ENCODE measurements at regions of chr4 and their contacts with region 1.

Region 1: GRCh38 chr4:101042847-101043246 is 304.5 kb downstream of the PPP3CA start:
- DNase-seq: no peak
- ATAC-seq: no peak
- H3K4me3 ChIP-seq: no peak overlapping the region
- H3K27ac ChIP-seq: no peak overlapping the region
- H3K4me1 ChIP-seq: no peaks in the 10 kb centered on the region
- H3K27me3 ChIP-seq: no peaks in the 10 kb centered on the region
- CTCF ChIP-seq: no peak
- EP300 ChIP-seq: no peak
- POLR2A ChIP-seq: no peak
- RAD21 ChIP-seq: no peak

Region 2: DNA sequence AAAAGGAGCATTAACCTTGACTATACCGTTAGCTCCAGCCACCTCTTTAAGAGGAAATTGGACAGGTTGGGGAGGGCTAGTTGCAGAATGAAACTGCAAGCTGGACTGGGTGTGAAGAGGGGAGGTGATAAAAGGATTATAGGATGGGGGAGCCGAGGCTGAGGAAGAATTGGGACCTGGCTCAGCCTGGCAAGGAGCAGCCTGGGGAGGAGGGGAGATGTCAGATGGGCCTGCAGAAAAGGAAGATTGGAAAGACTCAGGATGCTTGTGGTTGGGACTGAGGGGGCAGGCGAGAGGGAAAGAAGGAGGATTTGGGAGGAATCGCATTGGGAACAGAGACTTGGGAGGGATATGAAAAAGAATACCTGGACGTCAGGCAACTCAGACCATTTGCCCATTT is 47.2 kb before region 1 on chr4:
- CTCF ChIA-PET with region 1: no interaction called
- POLR2A ChIA-PET with region 1: no interaction called
- in situ Hi-C with region 1: no loop called
- intact Hi-C with region 1: no loop called
- DNase-seq: no peak
- ATAC-seq: no peak
- H3K4me3 ChIP-seq: no peak overlapping the region
- H3K27ac ChIP-seq: no peak overlapping the region
- H3K4me1 ChIP-seq: no peaks in the 10 kb centered on the region
- H3K27me3 ChIP-seq: no peaks in the 10 kb centered on the region
- CTCF ChIP-seq: no peak
- EP300 ChIP-seq: no peak
- POLR2A ChIP-seq: no peak
- RAD21 ChIP-seq: no peak

Region 3: GRCh38 chr4:101009471-101009870 is 33.4 kb before region 1 on chr4:
- CTCF ChIA-PET with region 1: no interaction called
- POLR2A ChIA-PET with region 1: no interaction called
- in situ Hi-C with region 1: no loop called
- intact Hi-C with region 1: no loop called
- DNase-seq: no peak
- ATAC-seq: no peak
- H3K4me3 ChIP-seq: no peak overlapping the region
- H3K27ac ChIP-seq: no peak overlapping the region
- H3K4me1 ChIP-seq: peaks cover 7% of the 10 kb centered on the region; the same call in 1 of the 2 replicates
- H3K27me3 ChIP-seq: no peaks in the 10 kb centered on the region
- CTCF ChIP-seq: no peak
- EP300 ChIP-seq: no peak
- POLR2A ChIP-seq: no peak
- RAD21 ChIP-seq: no peak

Region 4: GRCh38 chr4:101400096-101400495 is 357.2 kb after region 1 on chr4:
- CTCF ChIA-PET with region 1: no interaction called
- POLR2A ChIA-PET with region 1: no interaction called
- in situ Hi-C with region 1: no loop called
- intact Hi-C with region 1: loop called (anchors 5 kb)
- DNase-seq: no peak
- ATAC-seq: no peak
- H3K4me3 ChIP-seq: no peak overlapping the region
- H3K27ac ChIP-seq: no peak overlapping the region
- H3K4me1 ChIP-seq: no peaks in the 10 kb centered on the region
- H3K27me3 ChIP-seq: no peaks in the 10 kb centered on the region; a peak in 2 of 5 replicates
- CTCF ChIP-seq: no peak
- EP300 ChIP-seq: no peak
- POLR2A ChIP-seq: no peak
- RAD21 ChIP-seq: no peak

Measured in HepG2 (cell line).